GM12878 (cell line): ENCODE measurements at regions of chr16 and their contacts with region 1.

Region 1: GRCh38 chr16:56911771-56912571 is 20.0 kb upstream of the HERPUD1 start:
- DNase-seq: peak; percentile 72
- ATAC-seq: peak; percentile 81
- H3K4me3 ChIP-seq: no peak overlapping the region; the same call in 1 of the 2 replicates
- H3K27ac ChIP-seq: peak overlapping the region; percentile 34
- H3K4me1 ChIP-seq: peaks cover 46% of the 10 kb centered on the region
- H3K27me3 ChIP-seq: no peaks in the 10 kb centered on the region
- CTCF ChIP-seq: no peak
- EP300 ChIP-seq: peak; percentile 100; a peak in 3 of 4 replicates
- POLR2A ChIP-seq: no peak
- RAD21 ChIP-seq: 0 out of 2 replicates have a peak, but pooled peaks have one; percentile 0

Region 2: GRCh38 chr16:56848056-56848936 is 63.7 kb before region 1 on chr16:
- CTCF ChIA-PET with region 1: no interaction called
- POLR2A ChIA-PET with region 1: no interaction called
- RAD21 ChIA-PET with region 1: no interaction called
- SMC1A ChIA-PET with region 1: no interaction called
- in situ Hi-C with region 1: no loop called
- intact Hi-C with region 1: no loop called
- DNase-seq: no peak
- ATAC-seq: peak; percentile 42
- H3K4me3 ChIP-seq: no peak overlapping the region
- H3K27ac ChIP-seq: no peak overlapping the region
- H3K4me1 ChIP-seq: peaks cover 9% of the 10 kb centered on the region; the same call in 1 of the 2 replicates
- H3K27me3 ChIP-seq: no peaks in the 10 kb centered on the region
- CTCF ChIP-seq: no peak
- EP300 ChIP-seq: no peak
- POLR2A ChIP-seq: no peak
- RAD21 ChIP-seq: no peak

Region 3: DNA sequence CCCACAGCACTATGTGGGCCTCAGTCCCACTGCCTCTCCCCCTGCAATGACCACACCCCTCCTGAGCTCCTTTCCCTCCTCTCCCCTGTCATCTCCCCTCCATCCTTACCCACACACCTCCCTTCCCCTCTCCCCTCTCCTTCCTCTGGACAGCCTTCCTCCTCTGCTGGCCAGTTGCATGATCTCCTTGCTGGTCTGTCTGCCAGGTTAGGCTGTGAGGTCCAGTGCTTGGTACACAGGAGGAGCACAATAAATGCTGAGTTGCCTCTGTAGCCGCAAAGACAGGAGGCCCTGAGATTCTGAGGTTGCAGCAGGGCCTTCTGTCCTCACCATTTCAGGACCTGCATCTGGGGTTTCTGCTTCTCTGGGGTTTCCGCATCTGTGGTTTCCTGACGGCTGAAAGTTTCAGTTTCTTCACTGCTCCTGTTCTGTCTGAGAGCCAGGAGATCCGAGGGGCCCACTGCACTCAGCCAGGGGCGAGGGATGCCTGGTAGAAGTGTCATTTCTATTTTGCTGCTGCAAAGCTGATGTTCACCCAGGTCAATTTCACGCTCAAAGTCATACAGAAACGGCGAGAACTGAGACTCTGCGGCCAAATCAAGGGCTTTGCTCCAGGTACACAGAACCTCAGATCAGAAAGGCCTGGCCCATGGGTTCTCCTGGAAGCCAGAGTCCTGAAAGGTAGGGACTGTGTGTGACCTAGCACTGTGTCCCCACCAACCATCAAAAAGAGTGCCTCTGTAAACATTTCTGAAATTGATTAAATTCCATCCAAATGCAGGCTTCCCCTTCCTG is 51.5 kb before region 1 on chr16:
- CTCF ChIA-PET with region 1: interaction called, 50 read pairs
- POLR2A ChIA-PET with region 1: interaction called, 7 read pairs
- RAD21 ChIA-PET with region 1: interaction called, 6 read pairs
- SMC1A ChIA-PET with region 1: interaction called, 5 read pairs
- in situ Hi-C with region 1: no loop called
- intact Hi-C with region 1: loop called (anchors 2 kb)
- DNase-seq: peak; percentile 75
- ATAC-seq: peak; percentile 93
- H3K4me3 ChIP-seq: 0 out of 2 replicates have a peak overlapping the region, but pooled peaks have one; percentile 13
- H3K27ac ChIP-seq: peak overlapping the region; percentile 52
- H3K4me1 ChIP-seq: peaks cover 33% of the 10 kb centered on the region
- H3K27me3 ChIP-seq: no peaks in the 10 kb centered on the region
- CTCF ChIP-seq: no peak
- EP300 ChIP-seq: no peak
- POLR2A ChIP-seq: no peak
- RAD21 ChIP-seq: no peak; the same call in 1 of the 2 replicates

Region 4: GRCh38 chr16:56874800-56875199 is 37.2 kb before region 1 on chr16:
- CTCF ChIA-PET with region 1: interaction called, 50 read pairs
- POLR2A ChIA-PET with region 1: interaction called, 4 read pairs
- RAD21 ChIA-PET with region 1: interaction called, 10 read pairs
- SMC1A ChIA-PET with region 1: interaction called, 4 read pairs
- in situ Hi-C with region 1: no loop called
- intact Hi-C with region 1: loop called (anchors 2 kb)
- DNase-seq: no peak
- ATAC-seq: no peak
- H3K4me3 ChIP-seq: no peak overlapping the region
- H3K27ac ChIP-seq: no peak overlapping the region
- H3K4me1 ChIP-seq: peaks cover 29% of the 10 kb centered on the region
- H3K27me3 ChIP-seq: no peaks in the 10 kb centered on the region
- CTCF ChIP-seq: no peak
- EP300 ChIP-seq: no peak
- POLR2A ChIP-seq: no peak
- RAD21 ChIP-seq: no peak

Region 5: GRCh38 chr16:56888806-56889205 is 23.2 kb before region 1 on chr16:
- CTCF ChIA-PET with region 1: interaction called, 3 read pairs
- POLR2A ChIA-PET with region 1: interaction called, 14 read pairs
- RAD21 ChIA-PET with region 1: interaction called, 4 read pairs
- SMC1A ChIA-PET with region 1: interaction called, 26 read pairs
- in situ Hi-C with region 1: no loop called
- intact Hi-C with region 1: loop called (anchors 2 kb)
- DNase-seq: peak; percentile 61
- ATAC-seq: peak; percentile 94
- H3K4me3 ChIP-seq: no peak overlapping the region
- H3K27ac ChIP-seq: no peak overlapping the region
- H3K4me1 ChIP-seq: peaks cover 8% of the 10 kb centered on the region
- H3K27me3 ChIP-seq: no peaks in the 10 kb centered on the region
- CTCF ChIP-seq: peak in 2 of 3 experiments; percentile 15 to 27; a peak in 2 of 6 replicates
- EP300 ChIP-seq: peak in 1 of 2 experiments; percentile 57; a peak in 1 of 4 replicates
- POLR2A ChIP-seq: no peak
- RAD21 ChIP-seq: 0 out of 2 replicates have a peak, but pooled peaks have one; percentile 37

Region 6: DNA sequence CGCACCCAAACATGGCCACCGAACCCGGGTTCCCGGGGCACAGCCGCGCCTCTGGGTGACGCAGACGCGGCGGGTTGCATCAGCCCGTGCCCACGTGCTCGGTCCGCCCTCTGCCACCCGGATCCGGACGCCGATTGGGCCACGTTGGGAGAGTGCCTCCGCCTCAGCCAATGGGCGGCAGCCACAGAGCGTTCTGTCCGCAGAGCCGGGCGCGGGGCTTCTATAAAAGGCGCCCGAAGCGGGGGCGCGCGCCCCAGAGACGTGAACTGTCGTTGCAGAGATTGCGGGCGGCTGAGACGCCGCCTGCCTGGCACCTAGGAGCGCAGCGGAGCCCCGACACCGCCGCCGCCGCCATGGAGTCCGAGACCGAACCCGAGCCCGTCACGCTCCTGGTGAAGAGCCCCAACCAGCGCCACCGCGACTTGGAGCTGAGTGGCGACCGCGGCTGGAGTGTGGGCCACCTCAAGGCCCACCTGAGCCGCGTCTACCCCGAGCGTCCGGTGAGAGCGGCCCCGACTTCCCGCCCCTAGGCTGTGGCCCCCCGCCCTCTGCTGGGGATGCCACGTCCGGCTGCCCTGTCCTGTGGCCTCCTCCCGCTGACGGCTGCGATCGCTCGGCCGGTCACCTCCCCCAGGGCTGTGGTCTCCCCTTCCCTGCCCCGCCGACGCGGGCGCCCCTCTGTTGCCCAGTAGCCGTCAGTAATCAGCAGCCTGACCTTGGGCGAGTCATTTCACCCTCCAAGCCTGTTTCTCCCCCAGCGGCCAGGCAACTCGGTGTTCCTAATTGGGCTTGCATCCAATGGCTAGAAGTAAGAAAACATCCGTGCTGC is 20.1 kb after region 1 on chr16 and contains the start of gene HERPUD1:
- CTCF ChIA-PET with region 1: interaction called, 5 read pairs
- POLR2A ChIA-PET with region 1: interaction called, 306 read pairs
- RAD21 ChIA-PET with region 1: interaction called, 34 read pairs
- SMC1A ChIA-PET with region 1: interaction called, 52 read pairs
- in situ Hi-C with region 1: no loop called
- intact Hi-C with region 1: loop called (anchors 1 kb)
- DNase-seq: peak; percentile 89
- ATAC-seq: peak; percentile 84
- H3K4me3 ChIP-seq: peak within 1 kb of the TSS; percentile 92
- H3K27ac ChIP-seq: peak within 1 kb of the TSS; percentile 88
- H3K4me1 ChIP-seq: peaks cover 20% of the 10 kb centered on the region
- H3K27me3 ChIP-seq: no peaks in the 10 kb centered on the region
- CTCF ChIP-seq: no peak
- EP300 ChIP-seq: no peak
- POLR2A ChIP-seq: peak; percentile 99
- RAD21 ChIP-seq: no peak
- polyA plus RNA-seq, gene HERPUD1: 32.6 to 68.1 TPM

Region 7: GRCh38 chr16:56938422-56939156 is 26.6 kb after region 1 on chr16:
- CTCF ChIA-PET with region 1: interaction called, 7 read pairs
- POLR2A ChIA-PET with region 1: interaction called, 306 read pairs
- RAD21 ChIA-PET with region 1: interaction called, 10 read pairs
- SMC1A ChIA-PET with region 1: interaction called, 21 read pairs
- in situ Hi-C with region 1: no loop called
- intact Hi-C with region 1: no loop called
- DNase-seq: no peak
- ATAC-seq: peak; percentile 45
- H3K4me3 ChIP-seq: peak overlapping the region; percentile 24
- H3K27ac ChIP-seq: peak overlapping the region; percentile 5
- H3K4me1 ChIP-seq: peaks cover 56% of the 10 kb centered on the region
- H3K27me3 ChIP-seq: no peaks in the 10 kb centered on the region
- CTCF ChIP-seq: no peak
- EP300 ChIP-seq: peak; percentile 35 to 55; a peak in 2 of 4 replicates
- POLR2A ChIP-seq: peak; percentile 56
- RAD21 ChIP-seq: no peak

Region 8: GRCh38 chr16:56944954-56945839 is 33.2 kb after region 1 on chr16:
- CTCF ChIA-PET with region 1: interaction called, 11 read pairs
- POLR2A ChIA-PET with region 1: interaction called, 306 read pairs
- RAD21 ChIA-PET with region 1: interaction called, 8 read pairs
- SMC1A ChIA-PET with region 1: interaction called, 21 read pairs
- in situ Hi-C with region 1: no loop called
- intact Hi-C with region 1: no loop called
- DNase-seq: peak; percentile 61
- ATAC-seq: peak; percentile 34
- H3K4me3 ChIP-seq: no peak overlapping the region
- H3K27ac ChIP-seq: peak overlapping the region; percentile 40; the same call in 1 of the 2 replicates
- H3K4me1 ChIP-seq: peaks cover 47% of the 10 kb centered on the region
- H3K27me3 ChIP-seq: no peaks in the 10 kb centered on the region
- CTCF ChIP-seq: no peak
- EP300 ChIP-seq: peak in 1 of 2 experiments; percentile 55; a peak in 1 of 4 replicates
- POLR2A ChIP-seq: peak; percentile 76
- RAD21 ChIP-seq: no peak